ENCODE measurements at regions of chr6 and their contacts with region 1.

Region 1: DNA sequence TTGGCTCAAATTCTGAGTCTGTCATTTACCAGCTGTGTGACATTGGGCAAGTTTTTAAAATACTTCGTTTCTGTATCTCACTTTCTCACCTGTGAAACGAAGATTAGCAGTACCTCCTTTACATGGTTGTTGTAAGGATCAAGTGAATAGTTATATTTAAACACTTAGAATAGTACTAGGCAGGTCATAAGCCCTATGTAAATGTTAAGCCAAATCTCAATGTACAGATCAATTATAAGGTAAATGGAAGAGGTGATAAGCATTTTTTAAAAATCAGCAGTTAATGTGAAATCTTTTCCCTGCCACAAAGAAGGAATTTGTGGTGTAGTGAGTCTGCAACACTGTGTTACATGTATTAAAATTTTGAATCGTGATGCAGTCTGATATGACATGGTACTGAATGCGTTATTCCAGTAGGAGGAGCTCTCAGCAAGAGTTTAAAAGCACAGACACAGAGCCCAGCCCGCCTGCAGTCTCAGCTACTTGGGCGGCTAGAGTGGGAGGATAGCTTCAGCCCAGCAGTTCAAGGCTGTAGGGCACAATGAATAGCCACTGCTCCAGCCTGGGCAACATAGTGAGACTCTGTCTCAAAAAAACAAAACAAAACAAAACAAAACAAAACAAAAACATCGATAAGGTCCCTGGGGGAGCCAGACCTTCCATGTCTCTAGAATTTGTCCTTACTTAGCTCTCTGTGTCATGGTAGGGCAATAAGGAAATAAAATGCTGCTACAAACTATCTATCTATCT is 46.0 kb downstream of the GTF2H5 start:
- DNase-seq: peak; percentile 51
- H3K4me3 Mint-ChIP-seq: no peak overlapping the region
- H3K27ac Mint-ChIP-seq: no peak overlapping the region
- H3K4me1 Mint-ChIP-seq: peaks cover 25% of the 10 kb centered on the region
- H3K27me3 Mint-ChIP-seq: no peaks in the 10 kb centered on the region

Region 2: DNA sequence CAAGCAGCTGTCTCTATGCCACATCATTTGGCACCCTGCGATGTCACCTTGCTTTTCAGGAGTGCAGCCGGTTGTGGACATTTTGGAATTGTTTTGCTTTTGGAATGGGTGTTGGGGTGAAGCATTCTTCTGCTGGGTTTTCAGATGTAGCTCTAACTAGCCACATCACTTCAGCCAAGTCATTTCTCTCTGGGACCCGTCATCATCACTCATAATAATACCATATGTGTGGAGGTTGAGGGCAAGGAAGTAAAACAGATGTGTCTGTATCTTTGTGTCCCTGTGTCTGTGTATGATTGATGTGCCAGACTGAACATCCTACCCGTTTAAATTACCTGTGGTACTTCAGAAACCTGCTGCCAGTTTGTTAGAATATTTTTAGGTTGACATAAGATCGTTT is 48.7 kb after region 1 on chr6:
- intact Hi-C with region 1: no loop called
- DNase-seq: no peak
- H3K4me3 Mint-ChIP-seq: no peak overlapping the region
- H3K27ac Mint-ChIP-seq: no peak overlapping the region
- H3K4me1 Mint-ChIP-seq: peaks cover 24% of the 10 kb centered on the region
- H3K27me3 Mint-ChIP-seq: no peaks in the 10 kb centered on the region

Region 3: GRCh38 chr6:158518191-158519127 is 304.4 kb after region 1 on chr6:
- intact Hi-C with region 1: loop called (anchors 1 kb)
- DNase-seq: peak; percentile 60
- H3K4me3 Mint-ChIP-seq: peak overlapping the region; percentile 86
- H3K27ac Mint-ChIP-seq: peak overlapping the region; percentile 87
- H3K4me1 Mint-ChIP-seq: peaks cover 34% of the 10 kb centered on the region
- H3K27me3 Mint-ChIP-seq: peaks cover 20% of the 10 kb centered on the region

Region 4: DNA sequence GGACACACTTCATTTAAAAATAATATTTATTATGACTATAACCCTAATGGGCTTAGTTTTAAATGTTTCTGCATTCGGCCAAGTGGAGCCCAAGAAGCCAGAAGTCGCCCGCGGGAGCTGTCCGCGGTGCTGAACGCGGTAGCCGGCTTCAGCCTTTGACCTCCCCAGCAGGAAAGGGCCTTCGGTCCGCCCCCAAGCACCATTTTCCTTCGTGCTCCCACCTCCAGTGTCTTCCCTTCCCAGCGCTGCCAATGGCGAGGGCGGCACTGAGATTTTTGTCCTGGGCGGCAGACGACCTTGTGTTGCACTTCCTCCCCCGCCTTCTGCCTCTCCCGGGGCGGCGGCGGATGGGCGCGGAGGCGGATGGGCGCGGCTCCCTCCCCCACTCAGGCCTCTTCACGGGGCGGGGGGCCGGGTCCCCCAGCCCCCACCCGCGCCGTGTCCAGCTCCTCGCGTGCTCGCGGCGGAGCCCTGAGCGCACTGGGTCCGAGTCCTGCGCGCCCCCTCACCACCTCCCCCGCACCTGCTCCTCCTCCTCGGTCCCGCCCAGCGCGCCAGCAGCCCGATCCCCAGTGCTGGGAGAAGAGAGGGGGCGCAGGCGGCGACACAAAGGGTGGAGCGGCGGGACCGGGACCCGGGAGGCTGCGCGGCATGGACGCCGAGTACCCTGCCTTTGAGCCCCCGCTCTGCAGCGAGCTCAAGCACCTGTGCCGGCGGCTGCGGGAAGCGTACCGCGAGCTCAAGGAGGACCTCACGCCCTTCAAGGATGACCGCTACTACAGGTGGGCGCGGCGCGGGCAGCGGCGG is 322.2 kb after region 1 on chr6:
- intact Hi-C with region 1: loop called (anchors 5 kb)
- DNase-seq: peak; percentile 62
- H3K4me3 Mint-ChIP-seq: peak overlapping the region; percentile 78
- H3K27ac Mint-ChIP-seq: no peak overlapping the region
- H3K4me1 Mint-ChIP-seq: no peaks in the 10 kb centered on the region
- H3K27me3 Mint-ChIP-seq: peaks cover 44% of the 10 kb centered on the region

Region 5: GRCh38 chr6:158605266-158605878 is 391.3 kb after region 1 on chr6:
- intact Hi-C with region 1: loop called (anchors 1 kb)
- DNase-seq: peak; percentile 22
- H3K4me3 Mint-ChIP-seq: no peak overlapping the region
- H3K27ac Mint-ChIP-seq: no peak overlapping the region
- H3K4me1 Mint-ChIP-seq: peaks cover 10% of the 10 kb centered on the region
- H3K27me3 Mint-ChIP-seq: no peaks in the 10 kb centered on the region

Region 6: GRCh38 chr6:158686791-158687381 is 472.8 kb after region 1 on chr6:
- intact Hi-C with region 1: loop called (anchors 5 kb)
- DNase-seq: peak; percentile 61
- H3K4me3 Mint-ChIP-seq: peak overlapping the region; percentile 74
- H3K27ac Mint-ChIP-seq: peak overlapping the region; percentile 90
- H3K4me1 Mint-ChIP-seq: peaks cover 62% of the 10 kb centered on the region
- H3K27me3 Mint-ChIP-seq: no peaks in the 10 kb centered on the region